Caco-2 (cell line): ENCODE measurements at regions of chr10 and their contacts with region 1.

Region 1: GRCh38 chr10:17368708-17369272 is 85.6 kb downstream of the ST8SIA6 start:
- DNase-seq: no peak
- H3K4me3 ChIP-seq: no peak overlapping the region
- H3K4me3 Mint-ChIP-seq: no peak overlapping the region
- H3K27ac Mint-ChIP-seq: no peak overlapping the region
- H3K4me1 ChIP-seq: no peaks in the 10 kb centered on the region; the same call in 1 of the 2 replicates
- H3K4me1 Mint-ChIP-seq: peaks cover 16% of the 10 kb centered on the region
- H3K27me3 ChIP-seq: no peaks in the 10 kb centered on the region
- H3K27me3 Mint-ChIP-seq: no peaks in the 10 kb centered on the region
- CTCF ChIP-seq: no peak

Region 2: GRCh38 chr10:15754937-15755336 is 1613.9 kb before region 1 on chr10:
- CTCF ChIA-PET with region 1: no interaction called
- POLR2A ChIA-PET with region 1: no interaction called
- intact Hi-C with region 1: loop called (anchors 5 kb)
- DNase-seq: no peak
- H3K4me3 ChIP-seq: no peak overlapping the region
- H3K4me3 Mint-ChIP-seq: no peak overlapping the region
- H3K27ac Mint-ChIP-seq: no peak overlapping the region
- H3K4me1 ChIP-seq: no peaks in the 10 kb centered on the region
- H3K4me1 Mint-ChIP-seq: no peaks in the 10 kb centered on the region
- H3K27me3 ChIP-seq: no peaks in the 10 kb centered on the region
- H3K27me3 Mint-ChIP-seq: peaks cover 23% of the 10 kb centered on the region
- CTCF ChIP-seq: no peak

Region 3: DNA sequence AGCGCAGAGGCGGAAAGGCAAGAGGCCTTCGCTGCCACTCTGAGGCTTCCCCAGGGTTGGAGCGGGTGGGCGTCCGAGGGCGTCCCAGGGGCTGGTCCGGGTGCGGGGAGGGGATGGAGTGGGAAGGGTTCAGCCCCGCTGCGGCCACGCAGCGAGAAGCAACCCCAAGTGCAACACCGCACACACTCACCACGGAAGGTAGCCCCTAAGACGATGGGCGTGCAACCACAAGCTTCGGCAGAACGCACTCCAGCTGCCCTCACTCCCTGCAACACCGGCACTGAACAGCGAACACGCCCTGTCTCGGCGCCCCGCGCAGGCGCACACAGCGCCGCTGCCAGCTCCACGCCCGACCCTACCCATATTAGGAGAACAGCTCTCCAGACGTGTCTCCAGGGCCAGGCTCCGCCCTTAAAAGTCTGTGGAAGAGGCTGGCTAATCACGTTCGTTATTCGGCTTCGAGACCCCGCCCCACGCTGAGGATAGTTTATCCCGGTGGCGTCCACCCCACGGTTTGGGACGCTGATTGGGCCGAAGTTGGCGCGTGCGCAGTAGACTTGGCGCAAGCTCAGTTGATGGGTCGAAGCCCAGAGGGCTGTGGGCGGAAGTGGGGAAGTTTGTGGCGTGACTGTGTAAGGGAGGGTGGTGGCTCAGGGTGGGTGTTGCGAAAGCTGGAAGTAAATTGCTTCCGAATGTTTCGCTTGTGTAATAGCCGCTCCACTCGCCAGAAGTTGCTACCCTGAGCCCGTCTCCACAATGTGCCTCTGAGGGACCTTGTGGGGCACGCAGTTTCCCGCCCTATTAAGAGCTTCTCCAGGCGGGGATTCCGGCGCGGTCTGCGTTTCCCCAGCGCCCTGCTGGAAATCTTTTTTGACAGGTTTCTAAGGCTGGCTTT is 551.4 kb before region 1 on chr10 and contains the start of gene RSU1:
- CTCF ChIA-PET with region 1: no interaction called
- POLR2A ChIA-PET with region 1: no interaction called
- intact Hi-C with region 1: no loop called
- DNase-seq: peak; percentile 100
- H3K4me3 ChIP-seq: peak within 1 kb of the TSS; percentile 84
- H3K4me3 Mint-ChIP-seq: peak within 1 kb of the TSS; percentile 97
- H3K27ac Mint-ChIP-seq: peak within 1 kb of the TSS; percentile 89
- H3K4me1 ChIP-seq: peaks cover 4% of the 10 kb centered on the region
- H3K4me1 Mint-ChIP-seq: peaks cover 20% of the 10 kb centered on the region
- H3K27me3 ChIP-seq: no peaks in the 10 kb centered on the region
- H3K27me3 Mint-ChIP-seq: no peaks in the 10 kb centered on the region
- CTCF ChIP-seq: no peak
- total RNA-seq, gene RSU1: 62.0 and 66.6 TPM in 2 replicates

Region 4: GRCh38 chr10:17387861-17388508 is 19.2 kb after region 1 on chr10:
- CTCF ChIA-PET with region 1: no interaction called
- POLR2A ChIA-PET with region 1: no interaction called
- intact Hi-C with region 1: no loop called
- DNase-seq: peak; percentile 92 to 96
- H3K4me3 ChIP-seq: no peak overlapping the region; the same call in 1 of the 2 replicates
- H3K4me3 Mint-ChIP-seq: peak overlapping the region; percentile 57
- H3K27ac Mint-ChIP-seq: peak overlapping the region; percentile 48
- H3K4me1 ChIP-seq: peaks cover 34% of the 10 kb centered on the region
- H3K4me1 Mint-ChIP-seq: peaks cover 25% of the 10 kb centered on the region
- H3K27me3 ChIP-seq: no peaks in the 10 kb centered on the region
- H3K27me3 Mint-ChIP-seq: no peaks in the 10 kb centered on the region
- CTCF ChIP-seq: no peak